BJ (cell line): ENCODE measurements at regions of chr19 and their contacts with region 1.

Region 1: DNA sequence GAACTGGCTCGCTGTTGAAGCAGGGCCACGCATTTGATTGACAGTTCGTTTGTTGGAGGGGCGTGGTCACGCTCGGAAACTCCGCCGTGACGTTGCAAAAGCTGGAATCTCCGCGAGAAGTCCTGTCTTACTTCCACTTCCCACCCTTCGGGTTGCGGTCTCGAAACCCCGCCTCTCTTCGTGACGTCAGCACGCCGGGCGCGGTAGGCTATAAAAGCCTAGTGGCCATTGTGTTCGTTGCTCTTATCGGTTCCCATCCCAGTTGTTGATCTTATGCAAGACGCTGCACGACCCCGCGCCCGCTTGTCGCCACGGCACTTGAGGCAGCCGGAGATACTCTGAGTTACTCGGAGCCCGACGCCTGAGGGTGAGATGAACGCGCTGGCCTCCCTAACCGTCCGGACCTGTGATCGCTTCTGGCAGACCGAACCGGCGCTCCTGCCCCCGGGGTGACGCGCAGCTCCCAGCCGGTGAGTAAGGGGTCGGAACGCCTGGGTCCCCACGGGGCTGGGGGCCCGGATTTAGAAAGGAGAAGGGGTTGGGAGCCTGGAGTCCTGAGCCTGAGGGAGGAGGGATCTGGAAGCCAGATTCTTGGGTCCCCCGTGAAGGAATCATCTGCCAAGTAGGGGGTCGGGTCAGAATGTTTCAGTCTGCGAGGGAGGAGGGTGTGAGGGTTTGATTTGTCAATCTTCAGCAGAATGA is at the start of gene PPP1R15A:
- DNase-seq: peak; percentile 92
- H3K4me3 ChIP-seq: peak within 1 kb of the TSS; percentile 88
- H3K27me3 ChIP-seq: no peaks in the 10 kb centered on the region
- CTCF ChIP-seq: no peak
- polyA plus RNA-seq, gene PPP1R15A: 24.7 and 43.0 TPM in 2 replicates

Region 2: GRCh38 chr19:48970923-48971395 is 98.6 kb after region 1 on chr19:
- CTCF ChIA-PET with region 1: interaction called, 12 read pairs
- POLR2A ChIA-PET with region 1: interaction called, 3 read pairs
- DNase-seq: no peak
- H3K4me3 ChIP-seq: no peak overlapping the region
- H3K27me3 ChIP-seq: no peaks in the 10 kb centered on the region
- CTCF ChIP-seq: peak; percentile 94